Posterior cingulate gyrus (tissue), 11 donors: ENCODE measurements at regions of chr19 and their contacts with region 1.

Region 1: DNA sequence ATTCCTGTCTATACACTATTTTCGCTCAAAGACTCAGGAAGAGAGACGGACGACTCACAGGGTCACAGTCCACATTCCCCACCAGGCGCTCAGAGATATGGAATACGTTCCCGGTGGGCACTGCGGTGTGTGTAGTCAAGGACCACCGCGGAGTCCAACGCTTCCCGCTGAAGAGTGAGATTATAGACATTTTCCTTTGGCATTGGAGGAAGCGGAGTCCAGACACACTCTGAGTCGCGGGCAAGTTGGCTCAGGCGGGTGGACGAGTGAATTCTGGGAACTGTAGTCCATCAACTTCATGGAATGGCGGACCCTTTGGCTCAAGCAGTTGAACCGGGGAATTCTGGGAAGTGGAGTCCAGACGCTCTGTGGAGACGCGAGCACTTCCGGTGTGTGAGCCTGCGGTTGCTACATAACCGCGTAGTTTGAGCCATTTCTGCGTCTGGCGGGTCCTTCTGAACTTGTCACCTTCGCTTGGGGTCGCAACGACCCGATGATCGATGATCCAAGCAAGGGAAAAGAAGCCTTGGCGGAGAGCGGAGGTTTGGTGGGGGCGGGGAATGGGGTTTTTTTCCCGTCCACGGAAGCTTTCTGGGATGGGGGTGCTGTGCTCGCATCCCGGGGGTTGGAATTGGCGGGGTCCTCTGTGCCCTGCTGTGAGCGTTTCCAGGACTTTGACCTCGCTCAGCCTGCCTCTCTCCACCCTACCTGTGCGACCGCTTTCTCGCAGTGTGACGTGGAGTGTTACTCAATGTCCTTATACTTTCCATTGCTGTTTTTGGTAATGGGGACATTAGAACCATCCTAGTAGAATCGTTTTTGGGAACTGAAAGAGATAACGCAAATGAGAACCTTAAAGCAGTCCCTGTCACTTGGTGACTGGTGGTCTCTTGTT is at the start of gene ZNF230:
- DNase-seq: peak; percentile 84 to 98 (median 92)

Region 2: GRCh38 chr19:43957891-43958290 is 44.9 kb before region 1 on chr19:
- intact Hi-C with region 1: no loop called
- DNase-seq: no peak

Region 3: DNA sequence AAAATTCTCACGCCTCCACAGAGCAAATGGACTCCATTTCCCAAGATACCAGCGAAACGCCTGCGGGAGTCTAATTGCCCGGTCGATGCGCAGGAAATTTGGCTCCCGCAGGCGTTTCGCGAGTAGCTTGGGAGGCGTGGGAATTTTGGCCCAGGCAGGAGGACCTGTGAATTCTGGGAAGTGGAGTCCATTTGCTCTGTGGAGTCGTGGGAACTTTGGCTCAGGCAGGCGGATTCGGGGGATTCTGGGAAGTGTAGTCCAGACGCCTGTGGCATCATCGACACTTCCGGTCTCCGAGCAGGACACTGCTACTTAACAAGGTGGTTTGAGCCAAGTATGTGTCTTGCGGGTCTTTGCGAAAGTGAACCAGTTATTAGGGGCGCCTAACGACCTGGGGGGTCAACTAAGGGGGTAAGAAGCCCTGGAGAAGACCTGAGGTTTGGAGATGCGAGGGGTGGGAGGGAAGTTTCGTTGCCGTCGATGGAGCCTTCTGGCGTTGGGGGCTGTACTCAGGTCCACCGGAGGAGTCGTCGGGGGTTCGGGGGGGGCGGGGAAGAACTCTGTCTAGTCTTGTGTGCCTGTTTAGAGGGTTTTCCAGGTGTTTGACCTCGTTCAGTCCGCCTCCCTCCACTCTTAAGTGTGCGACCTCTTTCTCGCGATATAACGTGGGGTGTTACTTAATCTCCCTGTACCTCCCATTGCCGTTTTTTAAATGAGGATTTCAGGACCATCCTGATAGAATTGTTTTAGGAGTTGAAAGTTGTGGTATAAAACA is 18.7 kb before region 1 on chr19 and contains the start of gene ZNF155:
- intact Hi-C with region 1: loop called (anchors 1 kb)
- DNase-seq: peak; percentile 87 to 98 (median 93)

Region 4: GRCh38 chr19:44032001-44032610 is 29.3 kb after region 1 on chr19:
- intact Hi-C with region 1: no loop called
- DNase-seq: no peak

Region 5: DNA sequence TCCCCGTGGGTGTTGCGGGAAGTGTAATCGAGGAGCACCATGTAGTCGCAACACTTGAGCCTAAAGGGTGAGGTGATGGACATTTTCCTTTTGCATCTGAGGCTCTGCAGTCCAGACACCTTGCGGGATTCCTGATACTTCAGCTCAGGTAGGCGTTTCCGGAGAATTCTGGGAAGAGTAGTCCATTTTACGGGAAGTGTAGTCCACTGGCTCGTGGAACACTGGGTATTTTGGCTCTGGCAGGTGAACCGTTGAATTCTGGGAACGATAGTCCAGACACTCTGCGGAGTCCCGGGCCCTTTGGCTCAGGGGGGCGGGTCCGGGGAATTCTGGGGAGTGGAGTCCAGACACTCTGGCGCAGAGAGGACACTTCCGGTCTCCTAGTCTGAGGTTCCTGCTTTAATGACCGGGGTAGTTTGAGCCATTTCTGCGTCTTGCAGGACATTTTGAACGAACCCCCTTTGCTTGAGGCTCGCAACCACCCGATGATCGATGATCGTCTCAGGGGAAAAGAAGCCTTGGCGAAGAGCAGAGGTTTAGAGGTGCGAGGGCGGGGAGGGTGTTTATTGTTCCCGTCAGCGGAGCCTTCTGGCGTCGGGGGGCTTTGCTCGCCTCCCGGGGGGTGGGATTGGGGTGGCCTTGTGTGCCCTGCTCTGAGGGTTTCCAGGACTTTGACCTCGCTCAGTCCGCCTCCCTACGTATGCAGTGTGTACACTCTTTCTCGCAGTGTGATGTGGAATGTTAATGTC is 49.0 kb after region 1 on chr19 and contains the start of gene ZNF223:
- intact Hi-C with region 1: loop called (anchors 1 kb)
- DNase-seq: peak; percentile 95 to 99 (median 97)

Region 6: DNA sequence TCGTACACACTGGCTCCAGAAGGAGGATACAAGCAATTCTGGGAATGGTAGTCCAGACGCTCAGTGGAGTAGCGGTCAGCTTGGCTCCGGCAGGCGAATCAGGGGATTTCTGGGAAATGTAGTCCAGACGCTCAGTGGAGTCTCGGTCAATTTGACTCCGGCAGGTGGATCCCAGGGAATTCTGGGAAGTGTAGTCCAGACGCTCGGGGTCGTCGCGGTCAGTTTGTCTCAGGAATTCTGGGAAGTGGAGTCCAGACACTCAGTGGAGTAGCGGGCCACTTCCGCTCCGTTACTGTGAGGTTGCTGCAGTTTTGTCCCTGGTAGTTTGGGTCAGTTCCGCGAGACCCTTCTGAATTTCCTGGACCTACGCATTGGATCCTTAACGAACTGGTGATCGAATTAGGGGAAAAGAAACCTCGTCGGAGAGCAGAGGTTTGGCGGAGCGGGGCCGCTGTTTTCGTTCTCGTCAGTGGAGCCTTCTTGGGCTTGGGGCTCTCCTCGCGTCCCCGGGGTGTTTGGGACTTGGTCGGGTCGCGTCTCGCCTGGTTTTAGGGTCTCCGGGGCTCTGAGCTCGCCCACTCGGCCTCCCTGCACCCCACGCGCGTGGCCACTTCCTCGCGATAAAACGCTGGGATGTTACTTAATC is 110.4 kb after region 1 on chr19 and contains the start of gene ZNF225:
- intact Hi-C with region 1: loop called (anchors 1 kb)
- DNase-seq: peak; percentile 96 to 99 (median 97)